Cardiac septum (tissue), 1 donor: ENCODE measurements at regions of chr17 and their contacts with region 1.

Region 1: DNA sequence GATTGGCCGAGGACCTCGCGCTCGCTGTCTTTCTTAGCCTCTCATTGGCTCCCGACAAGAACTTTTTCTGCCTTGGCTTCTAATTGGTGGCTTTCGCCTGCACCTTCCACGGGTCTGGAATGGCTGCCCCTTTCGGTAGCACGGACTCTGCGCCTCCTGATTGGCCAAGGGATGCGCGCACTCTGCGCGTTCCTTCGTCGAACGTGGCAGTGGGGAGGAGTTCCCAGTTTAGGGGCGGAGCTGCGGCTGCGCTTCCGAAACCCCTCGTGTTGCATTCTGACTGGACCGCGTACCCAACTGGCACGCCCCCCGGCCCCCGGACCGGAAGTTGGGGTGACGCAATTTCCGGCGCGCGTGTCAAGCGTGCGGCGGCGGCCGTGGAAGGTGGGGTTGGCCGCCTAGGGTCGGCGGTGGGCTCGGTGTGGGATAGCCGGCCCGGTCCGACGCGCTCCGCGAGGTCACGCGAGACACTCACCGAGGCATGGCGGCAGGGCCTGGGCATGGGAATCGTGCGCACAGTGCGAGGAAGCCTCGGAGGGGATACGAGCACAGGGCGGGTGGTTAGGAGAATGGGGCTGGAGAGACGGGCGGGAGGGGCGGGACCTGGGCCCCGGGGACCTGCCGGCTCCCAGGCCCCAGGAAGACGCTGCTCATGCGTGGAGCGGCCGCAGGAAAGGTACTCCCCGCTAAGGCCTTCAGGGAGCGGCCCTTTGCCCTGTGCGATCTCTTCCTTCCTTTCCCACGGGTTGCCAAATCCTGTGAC is 602 bp upstream of the P4HB start:
- DNase-seq: peak; percentile 99

Region 2: DNA sequence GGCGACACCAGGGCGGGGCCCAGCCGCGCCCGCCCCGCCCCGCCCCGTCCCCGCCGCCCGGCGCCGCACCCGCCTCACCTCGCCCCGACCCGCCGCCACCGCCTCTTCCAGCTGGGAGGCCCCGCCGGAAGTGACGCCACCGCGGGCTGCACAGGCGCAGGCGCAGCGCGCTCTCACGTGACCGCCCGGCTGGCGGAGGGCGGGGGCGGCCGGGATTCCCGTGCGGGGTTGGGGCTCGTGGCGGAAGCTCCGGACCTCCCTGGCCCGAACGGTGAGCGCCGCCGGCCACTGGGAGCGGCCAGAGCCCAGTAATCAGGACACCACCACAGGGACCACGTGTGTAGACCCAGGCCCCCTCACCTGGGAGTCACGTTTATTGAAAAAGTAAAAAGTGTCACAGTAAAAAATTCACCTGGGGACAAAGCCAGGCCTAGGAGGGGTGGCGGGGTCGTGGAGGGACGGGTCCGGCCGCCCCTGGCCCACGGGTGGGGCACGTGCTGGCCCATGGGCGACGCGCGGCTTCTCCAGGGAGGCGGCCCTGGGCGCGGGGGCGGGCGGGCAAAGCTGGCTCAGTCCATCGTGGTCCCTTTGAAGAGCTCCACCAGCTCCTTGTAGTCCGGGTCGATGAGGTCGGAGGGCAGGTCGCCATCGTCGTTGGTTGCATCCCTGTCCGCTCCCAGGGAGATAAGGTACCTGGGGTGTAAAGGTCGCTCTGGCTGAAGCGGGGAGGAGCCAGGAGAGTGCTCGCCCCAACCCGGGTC is 27.6 kb before region 1 on chr17 and contains the start of gene MCRIP1:
- intact Hi-C with region 1: loop called (anchors 2 kb)
- DNase-seq: peak; percentile 95
- total RNA-seq, gene MCRIP1: 102 TPM